Ascending aorta (tissue), 2 donors: ENCODE measurements at regions of chr10 and their contacts with region 1.

Region 1: DNA sequence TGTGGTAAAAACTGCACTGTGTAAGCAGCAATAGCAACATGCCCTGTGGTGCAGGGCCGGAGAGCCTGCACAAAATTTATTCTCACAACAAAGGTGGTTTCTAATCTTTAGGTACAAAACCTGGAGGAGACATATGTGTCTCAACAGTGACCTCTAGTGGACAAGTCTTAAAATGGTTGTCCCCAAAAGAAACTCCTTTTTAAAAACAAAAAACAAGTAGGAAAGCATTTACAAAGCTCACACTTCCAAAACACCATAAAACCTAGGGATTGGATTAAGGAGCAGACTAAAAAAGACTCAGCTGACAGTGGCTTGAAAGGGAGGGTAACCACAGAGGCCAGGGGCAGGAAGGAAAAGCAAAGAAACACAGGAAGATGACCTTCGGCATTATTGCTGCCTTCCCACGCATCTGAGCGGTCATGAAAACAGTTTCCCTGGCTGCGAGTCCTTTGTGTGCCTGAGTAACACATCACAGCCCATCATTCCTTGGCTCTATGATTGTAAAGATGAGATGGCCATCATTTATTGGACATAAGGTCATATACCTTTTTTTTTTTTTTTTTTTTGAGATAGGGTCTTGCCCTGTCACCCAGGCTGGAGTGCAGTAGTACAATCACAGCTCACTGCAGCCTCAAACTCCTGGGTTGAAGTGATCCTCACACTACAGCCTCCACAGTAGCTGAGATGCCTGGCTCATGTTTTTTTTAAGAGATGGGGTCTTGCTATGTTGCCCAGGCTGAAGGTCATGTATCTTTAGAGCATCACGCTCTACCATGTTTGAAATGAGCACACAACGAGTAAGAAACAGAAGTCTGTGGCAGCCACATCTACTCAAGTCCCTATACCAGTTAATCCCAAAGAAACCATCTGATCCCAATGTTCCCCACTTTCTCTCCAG is 39.5 kb downstream of the RSU1 start:
- DNase-seq: no peak
- H3K4me3 ChIP-seq: no peak overlapping the region
- H3K27ac ChIP-seq: peak overlapping the region in 1 of 2 donors; percentile 31
- H3K4me1 ChIP-seq: no peaks in the 10 kb centered on the region
- H3K27me3 ChIP-seq: no peaks in the 10 kb centered on the region
- CTCF ChIP-seq: peak; percentile 17 to 77 (median 66)

Region 2: GRCh38 chr10:15901889-15902288 is 875.8 kb before region 1 on chr10:
- intact Hi-C with region 1: loop called (anchors 10 kb)
- DNase-seq: no peak
- H3K4me3 ChIP-seq: no peak overlapping the region
- H3K27ac ChIP-seq: no peak overlapping the region
- H3K4me1 ChIP-seq: no peaks in the 10 kb centered on the region
- H3K27me3 ChIP-seq: no peaks in the 10 kb centered on the region
- CTCF ChIP-seq: no peak

Region 3: GRCh38 chr10:16843252-16843870 is 65.6 kb after region 1 on chr10:
- intact Hi-C with region 1: no loop called
- DNase-seq: no peak
- H3K4me3 ChIP-seq: no peak overlapping the region
- H3K27ac ChIP-seq: no peak overlapping the region
- H3K4me1 ChIP-seq: peaks cover 5 to 13% of the 10 kb centered on the region in 2 donors
- H3K27me3 ChIP-seq: no peaks in the 10 kb centered on the region
- CTCF ChIP-seq: peak; percentile 62 to 69 (median 67)